Activated CD4-positive, alpha-beta T cell treated with anti-CD3 and anti-CD28 coated beads for 36 hours (primary cell): ENCODE measurements at regions of chr10 and their contacts with region 1.

Region 1: GRCh38 chr10:100373298-100374136 is 26.5 kb downstream of the SCD start:
- DNase-seq: peak; percentile 99
- ATAC-seq: peak; percentile 83
- H3K4me3 Mint-ChIP-seq: no peak overlapping the region
- H3K27ac Mint-ChIP-seq: no peak overlapping the region
- H3K4me1 Mint-ChIP-seq: peaks cover 40% of the 10 kb centered on the region
- H3K27me3 Mint-ChIP-seq: no peaks in the 10 kb centered on the region

Region 2: DNA sequence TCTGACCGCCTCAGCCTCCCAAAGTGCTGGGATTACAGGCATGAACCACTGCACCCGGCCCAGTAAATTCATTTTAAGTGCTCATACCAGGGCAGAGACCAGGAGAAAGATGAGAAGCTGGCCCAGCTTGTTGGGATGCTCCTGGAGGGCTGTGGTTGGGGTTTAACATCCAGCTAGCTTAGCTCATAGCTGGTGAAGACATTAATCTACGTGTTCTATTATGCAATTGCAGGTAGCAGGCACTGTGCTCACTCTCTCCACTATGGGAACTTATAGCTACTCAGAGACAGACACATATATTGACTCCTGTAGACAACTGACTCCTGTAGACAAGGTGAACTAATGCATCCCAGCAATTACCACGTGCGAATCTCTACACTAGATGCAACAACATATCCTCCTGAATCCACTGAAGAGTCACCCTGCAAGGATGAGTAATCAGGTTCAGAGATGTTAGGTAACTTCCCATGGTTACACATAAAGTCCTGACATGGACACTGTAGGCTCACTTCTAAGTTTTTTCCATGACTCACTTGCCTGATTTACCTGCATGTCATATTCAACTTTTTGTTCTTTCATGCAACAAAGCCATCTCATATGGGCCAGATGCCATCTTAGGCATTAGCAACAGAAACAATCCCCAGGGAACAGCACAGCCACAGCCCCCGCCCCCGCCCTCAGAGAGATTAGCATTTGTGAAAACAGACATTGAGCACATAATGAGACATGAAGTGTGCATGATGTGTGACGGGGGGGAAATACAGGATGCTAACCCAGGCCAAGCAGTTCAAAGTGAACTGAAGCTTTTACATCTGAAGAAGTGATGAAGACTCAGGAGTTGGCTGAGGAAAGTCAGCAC is 224.9 kb before region 1 on chr10:
- CTCF ChIA-PET with region 1: no interaction called
- POLR2A ChIA-PET with region 1: interaction called, 3 read pairs
- intact Hi-C with region 1: loop called in 1 of 2 experiments (anchors 2 kb)
- DNase-seq: peak; percentile 77
- ATAC-seq: peak; percentile 97
- H3K4me3 Mint-ChIP-seq: no peak overlapping the region
- H3K27ac Mint-ChIP-seq: peak overlapping the region; percentile 82
- H3K4me1 Mint-ChIP-seq: peaks cover 35% of the 10 kb centered on the region
- H3K27me3 Mint-ChIP-seq: peaks cover 7% of the 10 kb centered on the region

Region 3: GRCh38 chr10:100267237-100268104 is 106.0 kb before region 1 on chr10 and contains the start of gene CWF19L1:
- CTCF ChIA-PET with region 1: no interaction called
- POLR2A ChIA-PET with region 1: no interaction called
- intact Hi-C with region 1: loop called in 1 of 2 experiments (anchors 1 kb)
- DNase-seq: peak; percentile 86
- ATAC-seq: peak; percentile 92
- H3K4me3 Mint-ChIP-seq: peak within 1 kb of the TSS; percentile 97
- H3K27ac Mint-ChIP-seq: peak within 1 kb of the TSS; percentile 99
- H3K4me1 Mint-ChIP-seq: peaks cover 22% of the 10 kb centered on the region
- H3K27me3 Mint-ChIP-seq: no peaks in the 10 kb centered on the region
- total RNA-seq, gene CWF19L1: 43.4 to 47.5 TPM

Region 4: GRCh38 chr10:100346765-100347567 is 26.6 kb before region 1 on chr10 and contains the start of gene SCD:
- CTCF ChIA-PET with region 1: interaction called, 13 read pairs
- POLR2A ChIA-PET with region 1: interaction called, 32 read pairs
- intact Hi-C with region 1: loop called (anchors 1 kb)
- DNase-seq: peak; percentile 94
- ATAC-seq: peak; percentile 92
- H3K4me3 Mint-ChIP-seq: peak within 1 kb of the TSS; percentile 88
- H3K27ac Mint-ChIP-seq: peak within 1 kb of the TSS; percentile 91
- H3K4me1 Mint-ChIP-seq: peaks cover 44% of the 10 kb centered on the region
- H3K27me3 Mint-ChIP-seq: no peaks in the 10 kb centered on the region
- total RNA-seq, gene SCD: 203 to 206 TPM

Region 5: GRCh38 chr10:100529475-100530298 is 156.2 kb after region 1 on chr10 and contains the start of gene NDUFB8:
- CTCF ChIA-PET with region 1: interaction called, 3 read pairs
- POLR2A ChIA-PET with region 1: interaction called, 4 read pairs
- intact Hi-C with region 1: loop called (anchors 1 to 5 kb)
- DNase-seq: peak; percentile 93
- ATAC-seq: peak; percentile 72
- H3K4me3 Mint-ChIP-seq: peak within 1 kb of the TSS; percentile 88
- H3K27ac Mint-ChIP-seq: peak within 1 kb of the TSS; percentile 99
- H3K4me1 Mint-ChIP-seq: peaks cover 37% of the 10 kb centered on the region
- H3K27me3 Mint-ChIP-seq: no peaks in the 10 kb centered on the region
- total RNA-seq, gene NDUFB8: 291 to 375 TPM

Region 6: GRCh38 chr10:100670828-100671479 is 297.4 kb after region 1 on chr10:
- CTCF ChIA-PET with region 1: no interaction called
- POLR2A ChIA-PET with region 1: no interaction called
- intact Hi-C with region 1: no loop called
- DNase-seq: peak; percentile 81
- ATAC-seq: peak; percentile 95
- H3K4me3 Mint-ChIP-seq: no peak overlapping the region
- H3K27ac Mint-ChIP-seq: no peak overlapping the region
- H3K4me1 Mint-ChIP-seq: peaks cover 3% of the 10 kb centered on the region
- H3K27me3 Mint-ChIP-seq: peaks cover 64% of the 10 kb centered on the region

Region 7: DNA sequence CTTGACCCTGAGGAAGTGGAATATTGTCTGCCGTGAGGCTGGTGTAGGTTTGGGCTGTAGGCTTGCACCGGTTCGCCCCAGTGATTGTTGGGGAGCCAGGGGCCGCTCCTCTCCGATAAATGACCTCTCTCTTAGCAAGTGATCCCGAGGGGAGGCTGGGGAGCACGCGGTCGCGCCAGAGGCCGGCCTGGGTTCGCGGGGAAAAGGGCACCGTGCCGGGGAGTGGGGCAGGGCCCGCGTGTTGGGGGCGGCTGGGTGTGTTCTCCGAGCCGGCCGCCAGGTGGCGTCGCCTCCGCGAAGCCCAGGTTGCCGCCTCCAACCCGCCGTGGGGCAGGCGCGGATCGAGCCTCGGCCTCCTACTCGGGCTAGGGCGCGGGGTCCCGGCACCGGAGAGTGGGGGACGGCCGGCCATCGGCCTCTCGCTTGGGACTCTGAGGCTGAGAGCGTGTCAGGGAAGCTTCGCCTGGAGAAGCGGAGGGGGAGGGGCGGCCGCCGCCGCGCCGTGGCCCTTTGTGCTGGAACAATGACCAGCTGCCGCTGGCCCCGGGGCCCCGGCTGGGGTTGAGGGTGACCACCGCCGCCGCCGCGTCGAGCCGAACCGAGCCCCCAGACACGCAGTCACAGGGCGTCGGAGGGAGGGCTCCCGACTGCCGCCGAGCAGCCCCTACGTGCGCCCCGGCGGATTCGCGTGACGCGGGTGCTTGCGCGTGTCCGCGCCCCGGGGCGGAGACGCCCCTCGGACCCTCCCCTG is 625.6 kb after region 1 on chr10:
- CTCF ChIA-PET with region 1: no interaction called
- POLR2A ChIA-PET with region 1: no interaction called
- intact Hi-C with region 1: loop called in 1 of 2 experiments (anchors 5 kb)
- DNase-seq: peak; percentile 87
- ATAC-seq: peak; percentile 59
- H3K4me3 Mint-ChIP-seq: peak overlapping the region; percentile 76
- H3K27ac Mint-ChIP-seq: peak overlapping the region; percentile 81
- H3K4me1 Mint-ChIP-seq: peaks cover 20% of the 10 kb centered on the region
- H3K27me3 Mint-ChIP-seq: no peaks in the 10 kb centered on the region